ENCODE measurements at regions of chr7 and their contacts with region 1.

Region 1: DNA sequence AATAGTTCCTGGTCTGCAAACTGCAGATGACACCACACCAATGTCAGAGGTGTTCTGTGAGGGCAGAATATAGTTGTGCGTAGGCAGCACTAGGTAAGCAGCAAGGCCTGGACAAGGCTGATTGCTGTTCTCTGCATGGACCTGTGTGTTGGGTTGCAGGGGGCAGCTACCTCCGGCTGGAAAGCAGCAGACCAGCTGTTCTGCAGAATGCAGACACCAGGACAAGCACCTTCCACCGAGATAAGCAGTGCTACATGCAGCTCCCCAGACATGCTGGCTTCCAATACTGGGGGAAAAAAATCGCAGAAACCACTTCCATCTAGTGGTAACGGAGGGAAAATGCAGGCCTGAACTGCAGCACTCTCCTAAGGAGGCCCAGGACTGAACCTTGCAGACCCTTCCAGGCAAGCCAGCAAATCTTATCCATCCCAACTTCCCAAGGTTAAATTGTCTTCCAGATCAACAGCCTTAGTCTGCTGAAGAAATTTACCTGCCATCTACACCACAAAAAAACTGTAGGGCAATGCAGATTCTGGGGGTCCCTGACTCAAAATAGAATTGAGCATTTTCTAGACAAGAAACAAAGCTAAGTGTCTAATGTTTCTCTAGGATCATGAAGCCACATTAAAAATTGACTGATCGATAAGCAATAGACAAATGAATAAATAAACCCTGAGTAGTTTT is 50.5 kb upstream of the COBL start:
- DNase-seq: peak; percentile 58
- ATAC-seq: peak; percentile 95
- H3K4me3 Mint-ChIP-seq: no peak overlapping the region
- H3K27ac Mint-ChIP-seq: no peak overlapping the region
- H3K4me1 Mint-ChIP-seq: peaks cover 25% of the 10 kb centered on the region
- H3K27me3 Mint-ChIP-seq: no peaks in the 10 kb centered on the region; the same call in 1 of the 2 replicates
- CTCF ChIP-seq: peak; percentile 64

Region 2: DNA sequence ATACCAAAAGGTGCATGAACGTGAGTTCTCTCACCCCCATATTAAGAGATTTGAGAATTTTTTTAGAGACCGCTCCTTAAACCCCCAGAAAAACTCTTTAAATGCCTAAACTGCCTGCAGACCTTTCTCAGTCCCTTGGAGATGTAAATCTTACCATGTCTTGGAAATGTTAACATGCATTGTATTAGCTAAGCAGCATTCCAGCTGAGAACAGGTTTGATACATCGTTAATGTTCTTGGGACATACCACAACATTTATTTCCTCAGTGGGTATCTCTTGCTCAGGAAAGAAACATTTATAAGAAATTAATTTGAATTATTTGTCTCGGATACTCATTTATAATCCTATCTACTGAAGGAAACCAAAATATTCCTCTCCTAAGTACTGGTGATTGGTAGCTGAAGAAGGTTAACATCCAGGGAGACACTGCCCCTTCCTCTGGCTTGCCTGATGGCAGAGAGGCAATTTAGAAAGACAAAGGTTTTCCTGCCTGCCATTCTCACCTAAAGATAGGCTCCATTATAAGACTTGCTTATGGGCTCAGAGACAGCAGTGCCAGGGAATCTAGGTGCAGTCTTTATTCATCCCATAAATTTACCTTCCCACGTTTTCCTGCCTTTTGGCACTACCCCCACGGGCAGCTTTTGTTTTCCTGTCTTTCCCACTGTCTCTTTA is 191.6 kb before region 1 on chr7:
- CTCF ChIA-PET with region 1: interaction called, 21 read pairs
- POLR2A ChIA-PET with region 1: no interaction called
- DNase-seq: no peak
- ATAC-seq: peak; percentile 94
- H3K4me3 Mint-ChIP-seq: 0 out of 2 replicates have a peak overlapping the region, but pooled peaks have one; percentile 28
- H3K27ac Mint-ChIP-seq: peak overlapping the region; percentile 97
- H3K4me1 Mint-ChIP-seq: peaks cover 44% of the 10 kb centered on the region
- H3K27me3 Mint-ChIP-seq: no peaks in the 10 kb centered on the region
- CTCF ChIP-seq: no peak

Region 3: DNA sequence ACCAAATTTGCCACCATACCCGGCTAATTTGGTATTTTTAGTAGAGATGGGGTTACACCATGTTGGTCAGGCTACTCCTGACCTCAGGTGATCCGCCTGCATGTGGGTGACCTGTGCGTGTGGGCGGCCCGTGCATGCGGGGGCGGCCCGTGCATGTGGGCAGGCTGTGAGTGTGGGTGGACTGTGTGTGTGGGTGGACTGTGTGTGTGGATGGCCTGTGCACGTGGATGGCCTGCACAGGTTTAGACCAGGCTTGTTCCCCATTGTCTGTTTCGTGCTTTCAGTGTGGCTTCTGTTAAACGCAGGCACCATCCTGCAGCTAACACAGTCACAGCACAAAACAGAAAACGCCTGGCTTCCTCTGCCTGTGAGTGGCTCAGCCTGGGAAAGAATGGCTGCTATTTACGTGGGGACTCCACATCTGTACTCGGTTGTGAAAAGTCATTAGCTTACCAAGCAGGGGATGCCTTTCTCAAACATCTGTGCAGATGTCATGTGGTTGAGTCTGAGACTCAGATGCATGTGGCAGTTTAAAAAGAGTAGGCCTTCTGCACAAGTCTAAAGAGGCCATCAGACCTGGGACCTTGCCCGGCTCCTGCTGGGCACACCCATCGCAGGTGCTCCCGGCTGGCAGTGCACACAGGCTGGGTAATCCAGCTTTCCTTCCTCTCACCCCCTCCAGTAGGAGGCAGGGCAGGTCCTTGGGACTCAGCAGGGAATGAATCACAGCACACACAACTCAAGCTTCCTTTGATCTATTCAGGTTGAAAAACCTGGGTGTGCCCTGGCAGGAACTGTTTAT is 142.1 kb before region 1 on chr7:
- CTCF ChIA-PET with region 1: interaction called, 78 read pairs
- POLR2A ChIA-PET with region 1: no interaction called
- DNase-seq: peak; percentile 45
- ATAC-seq: peak; percentile 90
- H3K4me3 Mint-ChIP-seq: no peak overlapping the region
- H3K27ac Mint-ChIP-seq: peak overlapping the region; percentile 33; the same call in 1 of the 2 replicates
- H3K4me1 Mint-ChIP-seq: peaks cover 63% of the 10 kb centered on the region
- H3K27me3 Mint-ChIP-seq: no peaks in the 10 kb centered on the region
- CTCF ChIP-seq: no peak

Region 4: GRCh38 chr7:51263631-51264484 is 103.2 kb before region 1 on chr7:
- CTCF ChIA-PET with region 1: interaction called, 11 read pairs
- POLR2A ChIA-PET with region 1: no interaction called
- DNase-seq: no peak
- ATAC-seq: no peak
- H3K4me3 Mint-ChIP-seq: no peak overlapping the region
- H3K27ac Mint-ChIP-seq: peak overlapping the region; percentile 57; the same call in 1 of the 2 replicates
- H3K4me1 Mint-ChIP-seq: peaks cover 31% of the 10 kb centered on the region
- H3K27me3 Mint-ChIP-seq: no peaks in the 10 kb centered on the region
- CTCF ChIP-seq: no peak

Region 5: GRCh38 chr7:51290702-51291540 is 76.2 kb before region 1 on chr7:
- CTCF ChIA-PET with region 1: interaction called, 16 read pairs
- POLR2A ChIA-PET with region 1: no interaction called
- DNase-seq: no peak
- ATAC-seq: no peak
- H3K4me3 Mint-ChIP-seq: no peak overlapping the region
- H3K27ac Mint-ChIP-seq: no peak overlapping the region; the same call in 1 of the 2 replicates
- H3K4me1 Mint-ChIP-seq: peaks cover 52% of the 10 kb centered on the region
- H3K27me3 Mint-ChIP-seq: no peaks in the 10 kb centered on the region
- CTCF ChIP-seq: no peak

Region 6: DNA sequence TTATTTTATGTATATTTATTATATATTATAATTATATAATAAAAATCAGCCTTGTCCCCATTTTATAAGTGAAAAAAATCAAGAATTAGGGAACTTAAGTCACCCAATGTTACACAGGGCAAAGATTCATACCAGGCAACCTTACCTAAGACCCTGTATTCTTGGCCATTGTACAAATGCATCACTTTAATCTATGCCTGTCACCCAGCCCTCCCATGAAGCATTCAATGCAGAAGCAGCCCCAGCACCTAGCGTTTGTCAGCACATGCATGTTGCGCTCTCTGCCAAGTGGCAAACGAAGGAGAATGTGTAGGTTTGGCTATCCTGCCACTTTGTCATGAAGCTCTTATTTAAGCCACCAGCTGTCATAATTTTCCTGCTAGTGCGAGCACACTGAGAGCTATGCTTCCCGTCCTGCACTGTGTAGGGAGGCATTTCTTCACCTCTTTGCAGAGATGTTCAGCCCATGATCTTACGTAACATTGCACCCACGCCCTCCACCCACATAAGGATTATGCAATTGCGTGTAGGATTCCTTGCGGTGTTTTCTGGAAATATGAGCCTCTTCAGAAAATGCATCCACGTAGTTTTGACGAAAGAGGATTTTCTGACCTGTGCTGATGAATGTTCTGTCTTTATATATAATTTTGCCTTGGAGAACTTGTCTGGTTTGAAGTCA is 42.7 kb before region 1 on chr7:
- CTCF ChIA-PET with region 1: interaction called, 56 read pairs
- POLR2A ChIA-PET with region 1: no interaction called
- DNase-seq: no peak
- ATAC-seq: no peak
- H3K4me3 Mint-ChIP-seq: no peak overlapping the region
- H3K27ac Mint-ChIP-seq: peak overlapping the region; percentile 37
- H3K4me1 Mint-ChIP-seq: peaks cover 82% of the 10 kb centered on the region
- H3K27me3 Mint-ChIP-seq: peaks cover 32% of the 10 kb centered on the region
- CTCF ChIP-seq: no peak

Region 7: GRCh38 chr7:51633596-51633995 is 266.5 kb after region 1 on chr7:
- CTCF ChIA-PET with region 1: no interaction called
- POLR2A ChIA-PET with region 1: no interaction called
- DNase-seq: no peak
- ATAC-seq: no peak
- H3K4me3 Mint-ChIP-seq: no peak overlapping the region
- H3K27ac Mint-ChIP-seq: no peak overlapping the region
- H3K4me1 Mint-ChIP-seq: peaks cover 36% of the 10 kb centered on the region
- H3K27me3 Mint-ChIP-seq: no peaks in the 10 kb centered on the region
- CTCF ChIP-seq: no peak

Region 8: DNA sequence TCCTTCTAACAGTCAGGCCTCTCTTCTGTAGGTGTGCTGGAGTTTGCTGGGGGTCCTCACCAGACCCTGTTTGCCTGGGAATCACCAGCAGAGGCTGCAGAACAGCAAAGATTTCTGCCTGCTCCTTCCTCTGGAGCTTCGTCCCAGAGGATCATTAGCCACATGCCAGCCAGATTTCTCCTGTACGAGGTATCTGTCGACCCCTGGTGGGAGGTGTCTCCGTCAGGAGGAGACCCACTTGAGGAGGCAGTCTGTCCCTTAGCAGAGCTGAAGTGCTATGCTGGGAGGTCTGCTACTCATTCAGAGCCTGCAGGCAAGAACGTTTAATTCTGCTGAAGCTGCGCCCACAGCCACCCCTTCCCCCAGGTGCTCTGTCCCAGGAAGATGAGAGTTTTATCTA is 560.7 kb after region 1 on chr7:
- CTCF ChIA-PET with region 1: no interaction called
- POLR2A ChIA-PET with region 1: no interaction called
- DNase-seq: peak; percentile 17
- ATAC-seq: 0 out of 2 replicates have a peak, but pooled peaks have one; percentile 41
- H3K4me3 Mint-ChIP-seq: no peak overlapping the region
- H3K27ac Mint-ChIP-seq: no peak overlapping the region
- H3K4me1 Mint-ChIP-seq: no peaks in the 10 kb centered on the region
- H3K27me3 Mint-ChIP-seq: peaks cover 4% of the 10 kb centered on the region; the same call in 1 of the 2 replicates
- CTCF ChIP-seq: no peak

Region 9: DNA sequence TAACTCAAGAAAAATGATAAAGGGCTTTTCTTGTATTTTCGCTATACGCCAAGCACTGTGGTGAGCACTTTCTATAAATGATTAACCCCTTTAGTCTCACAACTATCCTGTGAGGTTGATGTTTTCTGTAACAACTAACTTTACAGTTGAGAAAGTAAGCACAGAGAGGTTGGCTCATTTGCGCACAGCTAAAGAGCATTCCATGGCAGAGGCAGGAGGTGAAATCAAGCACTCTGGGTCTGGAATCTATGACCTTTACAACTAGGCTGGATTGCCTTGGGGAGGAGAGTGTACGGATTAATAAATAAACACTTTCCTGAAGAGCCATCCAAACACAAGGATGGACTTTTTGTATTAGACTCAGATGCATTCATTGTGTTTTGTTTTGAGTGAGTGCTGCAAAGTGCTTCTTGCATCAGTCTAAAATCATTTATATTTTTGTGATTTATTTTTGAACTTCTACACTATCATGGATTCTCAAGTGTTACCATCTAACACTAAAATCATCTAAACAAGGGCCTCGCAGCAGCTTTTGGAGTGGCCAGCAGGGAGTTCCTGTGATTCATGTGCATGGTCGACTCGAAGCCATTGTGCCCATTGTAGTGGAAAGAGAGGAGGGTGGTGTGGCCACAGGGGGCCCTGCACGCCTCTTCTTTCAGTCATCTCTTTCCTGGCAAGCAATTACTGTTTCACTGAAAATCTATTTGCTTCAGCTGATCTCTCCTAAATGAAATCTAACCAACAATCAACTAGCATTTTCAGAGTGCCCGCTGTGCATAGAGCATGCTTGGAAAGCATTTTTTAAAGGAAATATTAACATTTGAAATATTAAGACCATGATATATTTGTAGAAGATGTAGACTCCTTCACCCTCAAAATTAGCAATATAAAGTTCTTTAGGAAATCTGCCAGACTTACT is 582.9 kb after region 1 on chr7:
- CTCF ChIA-PET with region 1: no interaction called
- POLR2A ChIA-PET with region 1: no interaction called
- DNase-seq: peak; percentile 74
- ATAC-seq: peak; percentile 97
- H3K4me3 Mint-ChIP-seq: peak overlapping the region; percentile 29
- H3K27ac Mint-ChIP-seq: peak overlapping the region; percentile 71
- H3K4me1 Mint-ChIP-seq: peaks cover 64% of the 10 kb centered on the region
- H3K27me3 Mint-ChIP-seq: peaks cover 3% of the 10 kb centered on the region; the same call in 1 of the 2 replicates
- CTCF ChIP-seq: no peak

Measured in WTC11 (cell line).